ENCODE measurements at regions of chrX and their contacts with region 1.

Region 1: DNA sequence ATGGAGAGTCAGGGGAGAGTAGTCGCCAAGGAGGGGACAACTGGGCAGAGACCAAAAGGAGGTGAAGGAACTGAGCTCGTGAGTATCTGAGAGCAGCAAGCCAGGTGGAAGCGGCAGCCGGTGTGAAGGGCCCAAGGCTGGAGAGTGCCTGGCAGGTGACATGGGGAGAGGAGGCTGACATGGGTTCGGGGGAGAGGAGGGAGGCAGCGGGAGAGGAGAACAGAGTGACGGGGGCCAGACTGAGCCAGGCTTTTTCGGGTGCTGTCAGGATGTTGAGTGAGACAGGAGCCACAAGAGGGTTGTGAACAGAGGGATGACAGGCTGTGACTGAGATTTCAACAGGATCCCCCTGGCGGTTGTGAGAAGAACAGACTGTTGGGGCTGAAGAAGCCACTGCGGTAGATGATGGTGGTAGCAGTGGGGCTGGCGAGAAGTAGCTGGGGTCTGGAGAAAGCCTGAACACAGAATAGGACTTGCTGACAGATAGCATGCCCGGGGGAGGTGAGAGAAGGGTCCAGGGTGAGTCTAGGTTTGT is 5.7 kb downstream of the ELK1 start:
- DNase-seq: no peak
- ATAC-seq: peak; percentile 55
- H3K4me3 ChIP-seq: no peak overlapping the region
- H3K27ac ChIP-seq: no peak overlapping the region
- H3K4me1 ChIP-seq: no peaks in the 10 kb centered on the region
- H3K27me3 ChIP-seq: no peaks in the 10 kb centered on the region

Region 2: GRCh38 chrX:47581731-47582647 is 62.6 kb before region 1 on chrX and contains the start of gene TIMP1:
- intact Hi-C with region 1: loop called in 1 of 2 experiments (anchors 10 kb)
- DNase-seq: peak; percentile 95 to 97
- ATAC-seq: peak; percentile 91
- H3K4me3 ChIP-seq: peak within 1 kb of the TSS; percentile 16 to 48
- H3K27ac ChIP-seq: peak within 1 kb of the TSS; percentile 77 to 86
- H3K4me1 ChIP-seq: no peaks in the 10 kb centered on the region
- H3K27me3 ChIP-seq: no peaks in the 10 kb centered on the region
- total RNA-seq, gene TIMP1: 1,378 to 1,710 TPM

Measured in aorta (tissue), 5 donors.